ENCODE measurements at regions of chr13 and their contacts with region 1.

Region 1: DNA sequence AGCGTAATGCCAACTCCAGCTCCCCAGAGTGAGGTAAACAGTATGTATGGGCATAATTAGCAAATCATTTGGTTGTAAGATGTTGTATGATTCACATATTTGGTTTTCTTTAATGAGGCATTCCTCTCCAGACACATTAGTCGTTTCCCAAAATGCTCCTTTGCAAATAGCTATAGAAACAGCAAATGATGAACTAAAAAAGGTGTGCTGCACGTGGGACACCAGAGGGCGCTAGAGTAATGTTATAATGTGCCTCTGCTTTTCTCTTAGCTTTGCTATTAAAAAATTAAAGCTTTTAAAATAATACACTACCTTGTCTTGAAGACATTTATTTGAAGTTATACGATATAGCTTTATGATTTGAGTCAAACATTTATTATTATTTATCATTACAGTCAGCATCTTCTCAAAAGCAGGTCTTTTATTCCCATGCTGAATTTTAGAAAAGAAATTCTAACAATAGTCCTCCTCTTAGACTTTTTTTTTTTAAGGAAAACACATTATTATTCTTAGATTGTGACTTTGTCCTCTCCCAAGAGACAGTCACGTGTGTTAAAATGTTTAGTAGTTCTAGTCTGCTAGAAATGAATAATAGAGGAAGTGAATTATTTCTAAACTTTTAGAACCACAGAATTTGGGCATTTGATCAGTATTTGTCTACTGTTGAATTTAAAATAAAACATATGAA is 121.6 kb upstream of the FRY start:
- DNase-seq: no peak
- H3K4me3 ChIP-seq: no peak overlapping the region
- H3K27me3 ChIP-seq: no peaks in the 10 kb centered on the region
- CTCF ChIP-seq: peak; percentile 81

Region 2: GRCh38 chr13:31835932-31836331 is 74.1 kb before region 1 on chr13:
- CTCF ChIA-PET with region 1: no interaction called
- POLR2A ChIA-PET with region 1: no interaction called
- DNase-seq: no peak
- H3K4me3 ChIP-seq: no peak overlapping the region
- H3K27me3 ChIP-seq: peaks cover 6% of the 10 kb centered on the region; the same call in 1 of the 2 replicates
- CTCF ChIP-seq: no peak

Region 3: GRCh38 chr13:31896427-31896826 is 13.6 kb before region 1 on chr13:
- CTCF ChIA-PET with region 1: interaction called, 12 read pairs
- POLR2A ChIA-PET with region 1: no interaction called
- DNase-seq: peak; percentile 84
- H3K4me3 ChIP-seq: no peak overlapping the region
- H3K27me3 ChIP-seq: no peaks in the 10 kb centered on the region
- CTCF ChIP-seq: no peak

Region 4: GRCh38 chr13:31930901-31931522 is 21.0 kb after region 1 on chr13:
- CTCF ChIA-PET with region 1: interaction called, 4 read pairs
- POLR2A ChIA-PET with region 1: interaction called, 23 read pairs
- DNase-seq: no peak
- H3K4me3 ChIP-seq: no peak overlapping the region
- H3K27me3 ChIP-seq: no peaks in the 10 kb centered on the region
- CTCF ChIP-seq: no peak

Region 5: GRCh38 chr13:32019612-32020233 is 109.7 kb after region 1 on chr13:
- CTCF ChIA-PET with region 1: interaction called, 11 read pairs
- POLR2A ChIA-PET with region 1: no interaction called
- DNase-seq: no peak
- H3K4me3 ChIP-seq: no peak overlapping the region
- H3K27me3 ChIP-seq: no peaks in the 10 kb centered on the region
- CTCF ChIP-seq: peak; percentile 90

Region 6: DNA sequence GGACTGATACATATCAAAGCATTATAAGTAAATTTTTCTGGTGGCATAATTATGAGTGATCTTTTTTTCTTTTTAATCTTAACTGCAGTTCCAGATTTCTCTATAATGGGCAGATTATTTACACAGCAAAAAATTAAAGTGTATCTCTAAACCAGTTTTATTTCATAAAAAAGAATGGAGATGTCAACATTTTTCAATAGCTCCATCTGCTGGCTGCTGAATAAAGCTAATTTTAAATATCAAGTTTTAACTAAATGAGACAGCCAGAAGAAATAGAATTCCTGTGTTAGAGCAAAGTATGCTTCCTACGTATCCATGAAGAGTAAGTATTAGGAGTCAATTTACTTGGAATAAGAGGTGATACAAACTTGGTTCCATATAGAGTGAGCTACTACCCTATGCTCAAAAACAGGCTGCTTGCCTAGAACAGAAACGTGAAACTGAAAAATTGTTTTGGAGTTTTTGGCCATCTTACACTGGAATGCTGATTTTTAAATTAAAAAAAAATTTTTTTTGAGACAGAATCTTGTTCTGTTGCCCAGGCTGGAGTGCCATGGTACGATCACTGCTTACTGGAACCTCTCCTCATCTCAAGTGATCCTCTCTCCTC is 671.3 kb after region 1 on chr13:
- CTCF ChIA-PET with region 1: interaction called, 50 read pairs
- POLR2A ChIA-PET with region 1: no interaction called
- DNase-seq: no peak
- H3K4me3 ChIP-seq: no peak overlapping the region
- H3K27me3 ChIP-seq: no peaks in the 10 kb centered on the region; the same call in 1 of the 2 replicates
- CTCF ChIP-seq: peak; percentile 49